Activated CD4-positive, alpha-beta T cell treated with anti-CD3 and anti-CD28 coated beads, Interleukin-2, amount 10 ng/mL, durations not matched to agents 7 days and 5 days (primary cell): ENCODE measurements at regions of chr15 and their contacts with region 1.

Region 1: DNA sequence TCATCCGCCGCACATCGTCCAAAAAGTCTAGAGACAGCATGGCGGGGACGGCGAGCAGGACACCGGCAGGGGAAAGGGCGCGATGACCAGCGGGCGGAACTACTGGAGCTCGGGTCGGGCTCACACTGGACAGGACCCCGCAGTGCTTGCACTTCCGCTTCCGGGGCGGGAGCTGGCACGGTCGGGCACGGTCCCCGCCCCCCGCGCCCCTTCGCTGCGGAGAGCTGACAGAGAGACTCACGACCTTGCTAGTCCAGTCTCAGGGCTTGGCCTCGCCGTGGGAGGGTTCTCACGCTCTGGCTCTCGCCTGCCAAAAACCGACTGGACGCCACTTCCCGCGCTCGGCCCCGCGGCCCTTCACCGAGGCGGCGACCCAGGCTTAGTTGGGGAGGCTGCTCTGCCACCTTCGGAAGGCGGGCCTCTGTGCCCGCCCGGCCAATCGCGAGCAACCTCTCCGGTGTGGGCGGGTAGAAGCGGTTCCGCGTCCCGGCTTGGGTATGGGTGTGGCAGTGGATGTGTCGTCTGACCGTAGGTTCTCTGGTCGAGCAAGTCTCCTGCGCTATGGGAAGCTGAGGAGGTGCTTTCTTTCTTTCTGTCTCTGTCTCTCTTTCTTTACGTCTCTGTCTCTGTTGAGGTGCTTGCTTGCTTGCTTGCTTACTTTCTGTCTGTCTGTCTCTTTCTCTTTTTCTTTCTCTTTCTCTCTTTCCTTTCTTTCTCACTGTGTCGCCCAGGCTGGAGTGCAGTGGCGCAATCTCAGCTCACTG is at the start of gene SEC11A:
- DNase-seq: peak; percentile 92
- H3K4me3 Mint-ChIP-seq: peak within 1 kb of the TSS; percentile 94
- H3K27ac Mint-ChIP-seq: peak within 1 kb of the TSS; percentile 97
- H3K4me1 Mint-ChIP-seq: peaks cover 54% of the 10 kb centered on the region
- H3K27me3 Mint-ChIP-seq: no peaks in the 10 kb centered on the region
- total RNA-seq, gene SEC11A: 110 to 119 TPM

Region 2: GRCh38 chr15:84734794-84735479 is 18.7 kb after region 1 on chr15:
- CTCF ChIA-PET with region 1: interaction called, 53 read pairs
- POLR2A ChIA-PET with region 1: interaction called, 13 read pairs
- DNase-seq: peak; percentile 83
- H3K4me3 Mint-ChIP-seq: peak overlapping the region; percentile 64
- H3K27ac Mint-ChIP-seq: peak overlapping the region; percentile 96
- H3K4me1 Mint-ChIP-seq: peaks cover 57% of the 10 kb centered on the region
- H3K27me3 Mint-ChIP-seq: no peaks in the 10 kb centered on the region

Region 3: DNA sequence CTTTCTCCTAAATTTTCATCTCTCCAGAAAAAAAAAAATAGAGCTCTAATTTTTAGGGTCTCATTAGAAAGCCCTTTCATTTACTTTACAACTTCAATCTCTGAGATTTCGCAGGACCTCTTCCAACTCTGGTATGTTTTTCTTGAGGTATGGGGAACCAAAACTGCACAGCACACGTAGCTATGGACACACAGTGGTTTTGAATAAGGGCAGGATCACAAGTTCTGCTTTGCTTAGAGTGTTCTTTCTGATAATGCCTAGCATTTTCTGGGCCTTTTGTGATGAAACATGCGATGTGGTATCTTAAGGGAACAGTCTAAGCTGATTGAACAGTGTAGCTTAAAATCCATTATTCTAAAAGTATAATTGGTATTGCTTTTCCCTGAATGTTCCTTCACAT is 57.5 kb after region 1 on chr15:
- CTCF ChIA-PET with region 1: interaction called, 3 read pairs
- POLR2A ChIA-PET with region 1: interaction called, 15 read pairs
- DNase-seq: no peak
- H3K4me3 Mint-ChIP-seq: no peak overlapping the region
- H3K27ac Mint-ChIP-seq: no peak overlapping the region
- H3K4me1 Mint-ChIP-seq: peaks cover 18% of the 10 kb centered on the region
- H3K27me3 Mint-ChIP-seq: no peaks in the 10 kb centered on the region